ENCODE measurements at regions of chr2 and their contacts with region 1.

Region 1: GRCh38 chr2:70907130-70908057 is 28.3 kb upstream of the ATP6V1B1 start:
- DNase-seq: peak; percentile 21
- ATAC-seq: no peak
- H3K4me3 Mint-ChIP-seq: peak overlapping the region; percentile 25
- H3K27ac Mint-ChIP-seq: no peak overlapping the region
- H3K4me1 Mint-ChIP-seq: peaks cover 8% of the 10 kb centered on the region
- H3K27me3 Mint-ChIP-seq: peaks cover 70% of the 10 kb centered on the region

Region 2: DNA sequence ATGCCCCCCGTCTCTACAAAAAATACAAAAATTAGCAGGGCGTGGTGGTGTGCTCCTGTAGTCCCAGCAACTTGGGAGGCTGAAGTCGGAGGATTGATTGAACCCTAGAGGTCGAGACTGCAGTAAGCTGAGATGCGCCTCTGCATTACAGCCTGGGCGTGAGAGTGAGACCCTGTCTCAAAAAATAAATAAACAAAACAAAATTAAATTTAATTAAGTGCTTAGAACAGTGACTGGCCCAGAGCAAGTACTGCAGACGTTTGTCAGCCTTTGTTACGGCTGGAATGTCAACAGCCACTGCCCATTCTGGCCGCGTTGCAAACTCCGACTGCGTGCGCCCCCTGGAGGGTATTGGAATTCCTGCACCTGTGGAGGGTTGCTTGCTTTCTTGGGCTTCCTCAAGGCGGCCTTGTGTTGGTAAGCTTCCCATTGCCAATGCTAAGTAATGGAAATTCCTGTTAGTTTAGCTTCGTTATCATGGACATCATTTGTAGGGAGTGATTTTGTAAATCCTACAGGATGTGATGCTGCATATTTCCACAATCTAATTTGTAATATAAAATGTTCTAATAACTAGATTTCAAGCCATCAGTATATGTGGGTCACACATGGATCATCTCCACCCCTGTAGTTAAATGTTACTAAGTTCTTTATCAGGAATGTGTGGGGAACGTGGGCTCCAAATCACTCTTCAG is 12.4 kb after region 1 on chr2:
- CTCF ChIA-PET with region 1: interaction called, 12 read pairs
- POLR2A ChIA-PET with region 1: no interaction called
- DNase-seq: peak; percentile 79
- ATAC-seq: peak; percentile 70
- H3K4me3 Mint-ChIP-seq: no peak overlapping the region
- H3K27ac Mint-ChIP-seq: no peak overlapping the region
- H3K4me1 Mint-ChIP-seq: no peaks in the 10 kb centered on the region
- H3K27me3 Mint-ChIP-seq: peaks cover 11% of the 10 kb centered on the region

Measured in activated CD8-positive, alpha-beta T cell treated with anti-CD3 and anti-CD28 coated beads, Interleukin-2, amount 10 ng/mL, durations not matched to agents 7 days and 5 days (primary cell).